Heart right ventricle (tissue), 16 donors: ENCODE measurements at regions of chr6 and their contacts with region 1.

Region 1: DNA sequence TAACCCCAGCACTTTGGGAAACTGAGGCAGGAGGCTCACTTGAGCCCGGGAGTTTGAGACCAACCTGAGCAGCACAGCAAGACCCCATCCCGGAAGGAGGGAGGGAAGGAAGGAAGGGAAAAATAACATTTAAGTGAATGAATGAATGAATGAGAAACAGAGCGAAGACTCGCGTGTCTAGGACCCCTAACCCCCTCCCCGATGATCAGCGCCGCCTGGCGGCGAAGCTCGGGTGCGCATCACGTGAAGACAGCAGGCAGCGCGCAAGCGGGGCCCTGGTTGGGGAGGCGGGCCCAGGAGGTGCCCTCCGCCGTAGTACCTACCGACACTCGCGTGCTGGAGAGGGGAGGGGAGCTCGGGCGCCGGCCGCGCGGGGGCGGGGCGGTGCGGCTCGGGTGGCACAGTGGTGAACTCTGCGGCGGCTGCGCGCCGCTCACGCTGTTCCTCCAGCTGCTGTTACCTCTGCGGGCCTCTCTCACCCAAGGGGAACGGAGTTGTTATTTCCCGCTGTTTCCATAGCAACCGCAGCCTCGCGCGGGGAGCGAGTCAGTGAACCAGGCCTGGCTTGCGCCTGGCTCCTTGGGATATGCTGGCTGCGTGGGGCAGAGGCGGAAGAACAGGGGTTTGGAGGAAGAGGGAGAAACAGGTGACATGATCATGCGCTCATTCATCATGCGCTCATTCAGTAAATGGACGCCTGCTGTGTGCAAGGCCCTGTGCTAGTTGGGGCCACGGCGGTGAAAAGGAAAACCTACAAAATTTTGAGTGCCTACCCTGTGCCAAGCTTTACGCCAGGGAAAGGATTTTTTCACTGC is 2.0 kb upstream of the DCDC2 start:
- DNase-seq: peak; percentile 16 to 65
- ATAC-seq: peak; percentile 42 to 88 (median 62)
- H3K4me3 ChIP-seq: peak overlapping the region; percentile 25 to 57 (median 52)
- H3K27ac ChIP-seq: no peak overlapping the region
- H3K4me1 ChIP-seq: peaks cover 5 to 22% (median 15%) of the 10 kb centered on the region in 9 donors
- H3K27me3 ChIP-seq: peaks cover 0 to 63% (median 50%) of the 10 kb centered on the region in 7 donors
- CTCF ChIP-seq: peak; percentile 11 to 72 (median 56)

Region 2: GRCh38 chr6:24274441-24275083 is 85.3 kb before region 1 on chr6:
- intact Hi-C with region 1: no loop called
- DNase-seq: no peak
- ATAC-seq: no peak
- H3K4me3 ChIP-seq: no peak overlapping the region
- H3K27ac ChIP-seq: no peak overlapping the region
- H3K4me1 ChIP-seq: no peaks in the 10 kb centered on the region
- H3K27me3 ChIP-seq: peaks cover 0 to 25% (median 11%) of the 10 kb centered on the region in 7 donors
- CTCF ChIP-seq: peak in 8 of 9 donors; percentile 13 to 62 (median 48)

Region 3: DNA sequence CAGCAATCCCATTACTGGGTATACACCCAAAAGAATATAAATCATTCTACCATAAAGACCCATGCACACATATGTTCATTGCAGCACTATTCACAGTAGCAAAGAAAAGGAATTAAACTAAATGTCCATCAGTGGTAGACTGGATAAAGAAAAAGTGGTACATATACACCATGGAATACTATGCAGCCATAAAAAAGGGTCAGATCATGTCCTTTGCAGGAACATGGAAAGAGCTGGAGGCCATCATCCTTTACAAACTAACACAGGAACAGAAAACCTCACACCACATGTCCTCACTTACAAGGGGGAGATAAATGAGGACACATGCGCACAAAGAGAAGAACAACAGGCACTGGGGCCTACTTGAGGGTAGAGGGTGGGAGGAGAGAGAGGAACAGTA is 62.9 kb before region 1 on chr6:
- intact Hi-C with region 1: no loop called
- DNase-seq: no peak
- ATAC-seq: no peak
- H3K4me3 ChIP-seq: no peak overlapping the region
- H3K27ac ChIP-seq: no peak overlapping the region
- H3K4me1 ChIP-seq: no peaks in the 10 kb centered on the region
- H3K27me3 ChIP-seq: peaks cover 0 to 8% (median 0%) of the 10 kb centered on the region in 7 donors
- CTCF ChIP-seq: no peak

Region 4: GRCh38 chr6:24374612-24375011 is 14.8 kb after region 1 on chr6:
- intact Hi-C with region 1: no loop called
- DNase-seq: no peak
- ATAC-seq: no peak
- H3K4me3 ChIP-seq: no peak overlapping the region
- H3K27ac ChIP-seq: no peak overlapping the region
- H3K4me1 ChIP-seq: no peaks in the 10 kb centered on the region
- H3K27me3 ChIP-seq: peaks cover 0 to 6% (median 0%) of the 10 kb centered on the region in 7 donors
- CTCF ChIP-seq: no peak

Region 5: GRCh38 chr6:24595512-24596217 is 235.8 kb after region 1 on chr6:
- intact Hi-C with region 1: loop called in 1 of 10 experiments (anchors 5 kb)
- DNase-seq: no peak
- ATAC-seq: no peak
- H3K4me3 ChIP-seq: no peak overlapping the region
- H3K27ac ChIP-seq: no peak overlapping the region
- H3K4me1 ChIP-seq: no peaks in the 10 kb centered on the region
- H3K27me3 ChIP-seq: peaks cover 0 to 4% (median 0%) of the 10 kb centered on the region in 7 donors
- CTCF ChIP-seq: no peak